ENCODE measurements at regions of chr3 and their contacts with region 1.

Region 1: DNA sequence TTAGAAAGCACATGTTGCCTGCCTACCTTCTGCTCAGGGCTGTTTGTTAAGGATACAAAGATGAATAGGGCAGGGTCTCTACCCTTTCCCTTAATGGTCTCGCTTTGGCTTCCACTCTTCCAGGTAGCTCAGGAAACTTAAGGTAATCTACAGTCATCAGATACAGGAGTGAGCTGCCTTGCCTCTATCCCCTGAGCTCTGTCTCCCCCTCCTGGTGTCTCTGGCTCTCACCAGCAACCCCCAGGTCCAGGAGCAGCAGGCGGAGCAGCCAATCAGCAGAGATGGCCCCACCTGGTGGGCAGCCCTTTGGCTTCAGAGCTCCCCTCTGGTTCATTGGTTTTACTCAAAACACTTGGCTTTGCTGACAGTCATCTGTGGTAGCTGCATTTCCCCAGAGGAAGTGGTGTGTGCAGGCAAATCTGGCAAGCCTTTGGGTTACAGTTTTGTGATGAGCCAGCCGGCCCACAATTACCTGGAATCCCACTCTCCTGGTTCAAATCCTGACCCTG is 8.5 kb upstream of the CX3CR1 start:
- DNase-seq: peak; percentile 94 to 98 (median 98)
- H3K4me3 ChIP-seq: no peak overlapping the region
- H3K27ac ChIP-seq: no peak overlapping the region
- H3K4me1 ChIP-seq: peaks cover 0 to 16% (median 11%) of the 10 kb centered on the region in 4 experiments
- H3K27me3 ChIP-seq: no peaks in the 10 kb centered on the region

Region 2: GRCh38 chr3:39141171-39141995 is 147.0 kb before region 1 on chr3:
- CTCF ChIA-PET with region 1: interaction called, 16 read pairs
- POLR2A ChIA-PET with region 1: no interaction called
- DNase-seq: peak in 2 of 3 donors; percentile 34 to 42
- H3K4me3 ChIP-seq: peak overlapping the region in 2 of 7 experiments; percentile 6 to 16
- H3K27ac ChIP-seq: peak overlapping the region in 1 of 2 experiments; percentile 34
- H3K4me1 ChIP-seq: peaks cover 1 to 41% (median 34%) of the 10 kb centered on the region in 4 experiments
- H3K27me3 ChIP-seq: no peaks in the 10 kb centered on the region

Region 3: GRCh38 chr3:39202094-39202493 is 86.3 kb before region 1 on chr3:
- CTCF ChIA-PET with region 1: interaction called, 618 read pairs
- POLR2A ChIA-PET with region 1: no interaction called
- DNase-seq: peak in 2 of 3 donors; percentile 42 to 58
- H3K4me3 ChIP-seq: no peak overlapping the region
- H3K27ac ChIP-seq: no peak overlapping the region
- H3K4me1 ChIP-seq: no peaks in the 10 kb centered on the region
- H3K27me3 ChIP-seq: no peaks in the 10 kb centered on the region

Region 4: GRCh38 chr3:39249453-39250115 is 38.8 kb before region 1 on chr3:
- CTCF ChIA-PET with region 1: interaction called, 11 read pairs
- POLR2A ChIA-PET with region 1: no interaction called
- DNase-seq: peak in 1 of 3 donors; percentile 50
- H3K4me3 ChIP-seq: peak overlapping the region in 4 of 7 experiments; percentile 33 to 64 (median 40)
- H3K27ac ChIP-seq: no peak overlapping the region
- H3K4me1 ChIP-seq: peaks cover 18 to 62% (median 51%) of the 10 kb centered on the region in 4 experiments
- H3K27me3 ChIP-seq: no peaks in the 10 kb centered on the region

Region 5: GRCh38 chr3:39313289-39313688 is 24.9 kb after region 1 on chr3:
- CTCF ChIA-PET with region 1: interaction called, 16 read pairs
- POLR2A ChIA-PET with region 1: no interaction called
- DNase-seq: no peak
- H3K4me3 ChIP-seq: no peak overlapping the region
- H3K27ac ChIP-seq: no peak overlapping the region
- H3K4me1 ChIP-seq: no peaks in the 10 kb centered on the region
- H3K27me3 ChIP-seq: no peaks in the 10 kb centered on the region

Region 6: GRCh38 chr3:39383881-39384664 is 95.7 kb after region 1 on chr3:
- CTCF ChIA-PET with region 1: interaction called, 41 read pairs
- POLR2A ChIA-PET with region 1: no interaction called
- DNase-seq: peak; percentile 92 to 97 (median 96)
- H3K4me3 ChIP-seq: peak overlapping the region; percentile 76 to 95 (median 85)
- H3K27ac ChIP-seq: peak overlapping the region; percentile 72 to 91
- H3K4me1 ChIP-seq: peaks cover 0 to 45% (median 30%) of the 10 kb centered on the region in 4 experiments
- H3K27me3 ChIP-seq: no peaks in the 10 kb centered on the region